Endothelial cell of umbilical vein (primary cell): ENCODE measurements at regions of chr21 and their contacts with region 1.

Region 1: DNA sequence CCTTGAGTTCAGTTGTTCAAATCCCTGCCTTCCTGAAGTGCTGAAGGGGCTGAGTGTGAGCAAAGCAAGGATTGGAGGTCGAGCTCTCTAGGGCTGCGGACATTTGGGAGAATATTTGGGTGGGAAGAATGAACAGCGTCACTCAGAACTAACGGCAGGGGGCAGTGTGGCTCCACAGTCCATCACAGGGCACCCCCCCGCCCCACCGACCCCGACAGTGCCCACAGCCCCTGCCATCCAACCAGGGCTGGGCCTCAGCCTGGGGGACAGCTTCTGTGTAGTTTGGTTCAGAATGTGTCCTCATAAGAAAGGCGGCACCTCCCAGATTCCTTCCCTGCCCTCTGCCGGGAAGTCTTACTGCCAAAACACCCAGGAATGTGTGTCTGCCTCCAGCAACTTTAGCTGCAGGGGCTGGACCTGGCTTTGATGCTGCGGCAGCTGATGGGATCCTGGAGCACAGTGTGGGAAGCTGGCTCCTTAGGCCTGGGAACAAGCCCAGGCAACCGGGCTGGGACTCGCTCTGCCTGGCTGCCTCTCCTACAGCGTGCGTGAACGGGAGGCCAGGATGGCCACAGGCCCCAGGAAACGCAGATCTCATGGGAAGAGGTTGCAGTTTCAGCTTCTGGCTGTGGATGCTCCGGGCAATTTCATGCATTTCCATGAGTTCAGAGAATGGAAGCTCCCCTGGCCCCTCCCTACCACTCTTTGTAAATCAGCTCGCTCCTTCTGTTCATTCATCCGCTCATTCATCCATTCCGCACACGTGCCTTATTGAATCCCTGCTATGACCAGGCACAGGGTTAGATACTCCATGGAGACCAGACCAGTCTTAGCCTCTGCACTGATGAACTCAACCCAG is 104.9 kb upstream of the TMPRSS2 start:
- DNase-seq: no peak
- H3K4me3 ChIP-seq: no peak overlapping the region
- H3K27ac ChIP-seq: no peak overlapping the region
- H3K4me1 ChIP-seq: no peaks in the 10 kb centered on the region
- H3K27me3 ChIP-seq: peaks cover 0 to 2% of the 10 kb centered on the region in 2 experiments
- CTCF ChIP-seq: peak; percentile 50 to 76
- POLR2A ChIP-seq: no peak

Region 2: DNA sequence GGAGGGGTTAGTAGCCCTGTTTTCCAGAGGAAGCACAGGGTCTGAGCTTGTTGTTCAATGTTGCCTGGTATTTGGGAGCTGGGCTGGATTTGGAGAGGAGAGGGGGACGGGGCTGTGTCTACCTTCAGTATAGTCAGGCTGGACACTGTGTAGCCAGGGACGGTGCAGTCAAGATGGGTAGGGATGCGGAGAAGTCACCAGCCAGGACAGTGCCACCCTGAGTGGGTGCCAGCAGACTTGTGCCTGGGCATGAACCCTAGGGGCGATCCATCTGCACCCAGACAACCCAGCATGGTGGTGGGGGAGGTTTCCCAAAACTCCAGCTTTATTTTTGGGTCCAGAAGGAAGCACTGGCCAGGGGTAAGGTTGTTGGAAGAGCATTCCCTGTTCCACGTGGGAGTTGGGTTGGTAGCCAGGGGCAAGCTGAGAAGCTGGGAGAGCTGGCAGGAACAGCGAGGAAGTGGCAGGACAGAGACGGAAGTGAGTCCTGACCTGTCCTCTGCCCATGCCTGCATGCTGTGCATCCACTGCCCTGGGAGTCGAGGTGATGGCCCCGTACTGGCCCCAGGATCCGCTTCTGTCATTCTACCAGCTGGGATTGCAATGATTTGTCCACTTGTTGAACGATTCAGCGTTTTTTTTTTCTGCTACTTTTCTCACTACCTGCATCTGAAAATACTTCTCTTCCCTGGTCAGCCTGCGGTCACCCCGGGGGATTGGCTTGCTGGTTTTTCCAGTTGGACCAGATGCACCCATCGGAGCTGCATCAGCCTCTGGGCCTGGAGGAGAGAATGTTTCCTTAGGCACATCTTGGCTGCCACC is 76.9 kb before region 1 on chr21:
- CTCF ChIA-PET with region 1: no interaction called
- POLR2A ChIA-PET with region 1: no interaction called
- dilution Hi-C with region 1: no loop called
- intact Hi-C with region 1: no loop called
- DNase-seq: no peak
- H3K4me3 ChIP-seq: no peak overlapping the region
- H3K27ac ChIP-seq: no peak overlapping the region
- H3K4me1 ChIP-seq: no peaks in the 10 kb centered on the region
- H3K27me3 ChIP-seq: no peaks in the 10 kb centered on the region
- CTCF ChIP-seq: no peak
- POLR2A ChIP-seq: no peak

Region 3: DNA sequence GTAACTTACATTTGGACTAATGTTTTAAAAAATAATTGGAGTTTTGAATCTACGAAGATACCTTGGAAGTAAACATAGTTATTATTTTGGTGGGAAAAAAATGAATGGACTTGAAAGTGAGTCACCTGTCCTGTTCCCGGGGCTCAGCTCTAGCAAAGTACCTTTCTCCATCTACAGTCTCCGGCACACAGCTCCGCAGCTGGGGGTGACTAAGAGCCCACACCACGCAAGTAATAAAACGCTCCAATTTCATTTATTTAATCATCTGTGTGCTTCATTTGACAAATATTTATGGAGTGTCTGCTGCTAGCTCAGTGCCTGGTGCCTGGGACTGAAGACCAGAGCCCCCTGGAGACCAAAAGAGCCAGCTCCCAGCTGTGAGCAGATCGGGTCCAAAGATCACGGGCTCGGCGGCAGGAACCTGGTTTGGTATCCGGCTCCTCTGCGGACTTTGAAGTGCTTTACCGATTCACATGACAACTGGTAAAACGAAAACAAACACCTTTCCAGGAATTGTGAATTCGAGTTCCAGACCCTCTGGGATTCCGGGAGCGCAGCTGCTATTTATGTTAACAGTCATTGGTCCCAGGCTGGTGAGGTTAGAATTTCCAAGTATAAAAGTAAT is 155.6 kb after region 1 on chr21:
- CTCF ChIA-PET with region 1: interaction called, 15 read pairs
- POLR2A ChIA-PET with region 1: no interaction called
- dilution Hi-C with region 1: no loop called
- intact Hi-C with region 1: no loop called
- DNase-seq: peak; percentile 26
- H3K4me3 ChIP-seq: no peak overlapping the region
- H3K27ac ChIP-seq: no peak overlapping the region
- H3K4me1 ChIP-seq: no peaks in the 10 kb centered on the region
- H3K27me3 ChIP-seq: peaks cover 76 to 92% of the 10 kb centered on the region in 2 experiments
- CTCF ChIP-seq: peak in 1 of 2 donors; percentile 19
- POLR2A ChIP-seq: no peak

Region 4: DNA sequence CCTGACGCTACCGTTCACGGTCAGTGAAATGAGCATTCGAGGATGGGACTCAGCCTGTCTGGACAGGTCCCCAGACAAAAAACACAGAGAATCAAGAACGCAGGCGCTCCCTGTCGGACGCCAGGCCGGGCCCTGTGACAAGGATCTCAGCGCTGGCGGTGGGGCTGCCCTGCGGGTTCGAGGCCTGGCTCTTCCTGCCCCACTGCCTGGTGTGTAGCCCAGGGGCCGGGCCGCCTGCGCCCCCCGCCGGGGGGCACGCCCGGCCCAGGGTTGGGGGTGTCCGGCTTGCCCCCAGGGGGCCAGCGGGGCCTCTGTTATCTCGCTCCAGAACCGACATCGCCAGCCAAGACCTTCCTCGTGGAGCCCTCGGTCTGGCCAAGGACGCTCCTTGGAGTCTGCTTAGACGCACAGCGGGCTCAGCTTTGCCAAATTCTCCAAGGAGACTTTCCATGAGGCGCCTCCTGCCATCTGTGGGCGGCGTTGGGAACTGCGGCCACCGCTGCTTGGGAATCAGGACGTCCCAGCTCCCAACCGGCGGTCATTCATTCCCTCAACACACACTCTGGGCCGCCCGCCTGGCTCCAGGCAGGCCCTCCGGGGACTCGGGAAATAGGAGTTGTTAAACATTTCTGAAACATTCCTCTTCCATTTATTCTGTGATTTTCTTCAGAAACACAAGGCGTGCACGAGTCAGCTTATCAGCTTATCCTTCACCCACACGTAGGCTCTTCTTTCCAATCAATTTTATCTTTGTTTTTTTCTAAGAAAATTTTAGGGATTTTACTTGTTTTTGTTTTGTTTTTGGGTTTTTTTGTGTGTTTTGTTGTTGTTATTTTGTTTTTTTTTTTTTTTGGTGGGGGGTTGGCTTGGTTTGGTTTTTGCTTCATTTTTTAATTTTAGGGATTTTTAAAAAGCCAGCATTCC is 165.3 kb after region 1 on chr21:
- CTCF ChIA-PET with region 1: interaction called, 94 read pairs
- POLR2A ChIA-PET with region 1: no interaction called
- dilution Hi-C with region 1: no loop called
- intact Hi-C with region 1: loop called (anchors 1 kb)
- DNase-seq: peak; percentile 58
- H3K4me3 ChIP-seq: no peak overlapping the region
- H3K27ac ChIP-seq: no peak overlapping the region
- H3K4me1 ChIP-seq: no peaks in the 10 kb centered on the region
- H3K27me3 ChIP-seq: peaks cover 23 to 51% of the 10 kb centered on the region in 2 experiments
- CTCF ChIP-seq: peak; percentile 77 to 95
- POLR2A ChIP-seq: no peak